Activated T-helper 2 cell treated with anti-CD3 and anti-CD28 coated beads, Interferon-gamma antibody, Interleukin-2, Interleukin-4, amounts not matched to agents 10 μg/mL and 5 μg/mL and 100 μg/mL, durations not matched to agents 14 hours and 24 hours and 36 hours (primary cell): ENCODE measurements at regions of chr1 and their contacts with region 1.

Region 1: GRCh38 chr1:204565617-204566582 is 49.7 kb downstream of the MDM4 start:
- DNase-seq: peak; percentile 60
- H3K4me3 Mint-ChIP-seq: no peak overlapping the region
- H3K27ac Mint-ChIP-seq: peak overlapping the region; percentile 79
- H3K4me1 Mint-ChIP-seq: peaks cover 51% of the 10 kb centered on the region
- H3K27me3 Mint-ChIP-seq: no peaks in the 10 kb centered on the region

Region 2: GRCh38 chr1:204446370-204447111 is 119.4 kb before region 1 on chr1:
- intact Hi-C with region 1: no loop called
- DNase-seq: peak; percentile 63
- H3K4me3 Mint-ChIP-seq: no peak overlapping the region
- H3K27ac Mint-ChIP-seq: peak overlapping the region; percentile 55
- H3K4me1 Mint-ChIP-seq: peaks cover 14% of the 10 kb centered on the region
- H3K27me3 Mint-ChIP-seq: no peaks in the 10 kb centered on the region

Region 3: DNA sequence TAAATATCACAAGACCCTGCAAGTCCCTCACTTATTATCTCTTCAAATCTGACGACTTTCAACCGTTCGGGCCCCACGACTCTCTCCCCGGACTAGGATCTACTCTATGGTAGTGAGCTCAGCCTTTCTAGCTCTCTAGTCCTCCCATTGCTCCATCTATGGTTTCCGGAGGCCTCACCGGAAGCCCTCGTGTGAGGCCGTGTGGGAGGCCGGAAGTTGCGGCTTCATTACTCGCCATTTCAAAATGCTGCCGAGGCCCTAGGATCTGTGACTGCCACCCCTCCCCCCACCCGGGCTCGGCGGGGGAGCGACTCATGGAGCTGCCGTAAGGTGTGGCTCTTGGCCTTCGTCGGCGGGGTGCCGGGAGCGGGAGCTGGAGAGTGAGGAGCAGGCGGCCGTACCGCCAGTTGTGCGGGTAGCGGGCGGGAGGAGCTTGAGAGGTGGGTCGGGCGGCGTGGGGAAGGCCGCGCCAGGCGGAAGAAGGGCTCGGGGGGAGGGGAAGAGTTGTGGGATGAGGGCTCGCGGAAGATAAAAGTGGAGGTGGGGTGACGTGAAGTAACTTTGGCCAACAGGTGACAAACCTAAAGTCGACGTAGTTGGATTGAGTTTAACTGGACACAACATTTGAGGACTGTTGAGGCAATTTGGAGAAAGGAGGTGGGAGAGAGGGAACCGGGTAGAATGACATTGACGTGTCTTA is 49.6 kb before region 1 on chr1 and contains the start of gene MDM4:
- intact Hi-C with region 1: loop called (anchors 5 kb)
- DNase-seq: peak; percentile 91
- H3K4me3 Mint-ChIP-seq: no peak within 1 kb of the TSS
- H3K27ac Mint-ChIP-seq: no peak within 1 kb of the TSS
- H3K4me1 Mint-ChIP-seq: peaks cover 49% of the 10 kb centered on the region
- H3K27me3 Mint-ChIP-seq: no peaks in the 10 kb centered on the region
- total RNA-seq, gene MDM4: 74.5 and 79.1 TPM in 2 replicates

Region 4: DNA sequence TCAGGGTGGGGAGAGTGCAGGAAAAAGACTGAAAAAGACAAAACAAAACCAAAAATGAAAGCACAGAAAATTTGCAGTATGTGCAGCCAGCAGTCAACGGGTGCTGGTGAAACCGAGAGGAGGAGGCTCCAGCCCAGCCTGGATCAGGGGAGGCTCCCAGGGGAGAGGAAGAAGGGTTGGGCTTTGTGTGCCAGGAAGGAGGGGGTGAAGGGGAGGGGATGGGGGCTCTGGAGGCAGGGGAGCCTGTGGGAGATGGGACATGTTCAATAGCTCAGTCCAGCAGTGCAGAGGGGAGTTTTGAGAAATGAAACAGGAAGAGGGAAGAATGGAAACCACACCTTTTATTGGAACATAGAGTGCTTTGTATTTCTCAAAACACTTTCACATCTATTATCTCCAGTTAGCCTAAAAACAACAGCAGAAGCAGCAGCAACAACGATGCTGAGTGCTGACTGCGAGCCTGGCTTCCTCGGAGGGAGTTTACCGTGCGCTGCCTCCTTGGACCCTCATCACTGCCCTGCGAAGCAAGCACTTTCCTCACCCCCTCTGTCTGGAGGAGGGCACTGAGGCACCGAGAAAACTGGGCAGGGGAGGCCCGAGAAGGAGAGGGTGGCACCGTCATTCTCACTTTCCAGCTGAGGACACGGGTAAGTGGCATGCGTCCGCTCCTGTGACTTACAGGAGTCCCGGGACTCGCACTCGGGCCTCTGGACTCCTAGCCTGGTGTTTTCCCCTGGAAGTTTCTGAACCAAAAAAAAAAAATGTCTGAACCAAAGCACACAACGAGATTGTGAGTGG is 13.2 kb after region 1 on chr1:
- intact Hi-C with region 1: loop called (anchors 2 kb)
- DNase-seq: peak; percentile 54
- H3K4me3 Mint-ChIP-seq: peak overlapping the region; percentile 65
- H3K27ac Mint-ChIP-seq: peak overlapping the region; percentile 79
- H3K4me1 Mint-ChIP-seq: peaks cover 23% of the 10 kb centered on the region
- H3K27me3 Mint-ChIP-seq: no peaks in the 10 kb centered on the region

Region 5: DNA sequence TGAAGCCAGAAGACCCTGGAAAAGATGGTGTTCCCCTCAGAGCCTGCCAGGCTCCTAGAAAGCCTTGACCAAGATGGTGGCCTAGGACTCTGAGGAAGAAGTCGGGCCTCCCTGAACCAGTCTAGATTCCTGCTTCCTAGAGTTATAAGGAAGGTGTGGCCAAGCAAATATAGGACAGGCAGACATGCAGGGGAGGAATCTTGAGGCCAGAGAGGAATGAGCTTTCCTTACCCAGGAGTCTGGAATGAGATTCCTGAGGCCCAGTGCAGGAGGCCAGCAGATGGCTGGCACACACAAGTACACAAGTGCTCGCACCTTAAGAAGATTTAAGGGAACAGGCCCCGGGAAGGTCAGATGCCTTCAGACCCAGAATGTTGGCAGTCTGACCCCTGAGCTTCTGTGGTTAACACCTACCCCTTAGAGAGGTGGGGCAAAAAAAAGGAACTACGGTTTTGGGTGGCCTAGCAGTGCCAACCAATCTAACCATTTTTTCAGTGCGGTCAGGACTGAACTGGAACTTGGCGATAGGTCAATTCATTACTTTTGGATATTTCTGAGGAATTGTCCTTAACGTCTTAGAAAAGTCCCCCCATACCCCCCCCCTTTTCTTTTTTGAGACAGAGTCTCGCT is 23.6 kb after region 1 on chr1:
- intact Hi-C with region 1: no loop called
- DNase-seq: no peak
- H3K4me3 Mint-ChIP-seq: no peak overlapping the region
- H3K27ac Mint-ChIP-seq: no peak overlapping the region
- H3K4me1 Mint-ChIP-seq: no peaks in the 10 kb centered on the region
- H3K27me3 Mint-ChIP-seq: no peaks in the 10 kb centered on the region

Region 6: GRCh38 chr1:204763706-204764427 is 198.0 kb after region 1 on chr1:
- intact Hi-C with region 1: loop called (anchors 1 kb)
- DNase-seq: peak; percentile 65
- H3K4me3 Mint-ChIP-seq: peak overlapping the region; percentile 56
- H3K27ac Mint-ChIP-seq: no peak overlapping the region
- H3K4me1 Mint-ChIP-seq: peaks cover 14% of the 10 kb centered on the region
- H3K27me3 Mint-ChIP-seq: peaks cover 33% of the 10 kb centered on the region

Region 7: DNA sequence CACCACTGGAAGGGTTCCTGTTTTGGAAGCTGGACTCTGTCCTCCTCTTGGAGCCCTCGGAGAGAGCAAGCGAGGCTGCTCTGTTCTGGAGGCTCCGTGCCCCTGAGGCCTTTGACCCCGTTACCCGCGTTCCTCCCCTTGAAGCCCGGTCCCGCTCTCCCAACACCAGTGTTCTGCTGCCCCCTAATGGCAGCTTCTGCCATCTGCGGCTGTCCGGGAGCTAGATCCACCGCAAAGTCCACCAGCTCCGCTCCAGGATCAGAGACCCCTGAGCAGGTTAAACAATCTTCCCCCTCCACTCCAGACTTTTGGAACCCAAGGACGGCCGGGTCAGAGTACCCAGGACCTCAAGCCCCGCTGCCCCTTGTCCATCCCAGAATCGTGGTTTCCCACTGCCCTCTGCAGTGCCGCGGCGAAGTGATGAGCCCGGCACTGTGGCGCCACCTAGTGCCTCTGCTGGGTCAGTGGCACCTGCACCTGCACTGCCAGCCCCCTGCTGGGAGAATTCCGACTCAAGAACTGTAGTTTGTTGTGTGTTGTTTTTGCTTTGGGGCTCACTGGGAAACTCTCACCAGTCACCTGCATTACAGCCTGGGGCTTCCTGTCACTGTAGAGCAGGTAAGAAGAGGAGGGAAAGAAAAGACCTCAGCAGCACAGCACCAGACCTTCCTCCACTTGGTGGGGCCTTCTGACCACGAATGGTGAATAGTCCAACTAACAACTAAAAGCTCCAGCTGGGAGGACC is 241.2 kb after region 1 on chr1:
- intact Hi-C with region 1: loop called (anchors 1 kb)
- DNase-seq: peak; percentile 77
- H3K4me3 Mint-ChIP-seq: peak overlapping the region; percentile 91
- H3K27ac Mint-ChIP-seq: peak overlapping the region; percentile 71
- H3K4me1 Mint-ChIP-seq: peaks cover 4% of the 10 kb centered on the region
- H3K27me3 Mint-ChIP-seq: peaks cover 9% of the 10 kb centered on the region